ENCODE measurements at regions of chr6 and their contacts with region 1.

Region 1: DNA sequence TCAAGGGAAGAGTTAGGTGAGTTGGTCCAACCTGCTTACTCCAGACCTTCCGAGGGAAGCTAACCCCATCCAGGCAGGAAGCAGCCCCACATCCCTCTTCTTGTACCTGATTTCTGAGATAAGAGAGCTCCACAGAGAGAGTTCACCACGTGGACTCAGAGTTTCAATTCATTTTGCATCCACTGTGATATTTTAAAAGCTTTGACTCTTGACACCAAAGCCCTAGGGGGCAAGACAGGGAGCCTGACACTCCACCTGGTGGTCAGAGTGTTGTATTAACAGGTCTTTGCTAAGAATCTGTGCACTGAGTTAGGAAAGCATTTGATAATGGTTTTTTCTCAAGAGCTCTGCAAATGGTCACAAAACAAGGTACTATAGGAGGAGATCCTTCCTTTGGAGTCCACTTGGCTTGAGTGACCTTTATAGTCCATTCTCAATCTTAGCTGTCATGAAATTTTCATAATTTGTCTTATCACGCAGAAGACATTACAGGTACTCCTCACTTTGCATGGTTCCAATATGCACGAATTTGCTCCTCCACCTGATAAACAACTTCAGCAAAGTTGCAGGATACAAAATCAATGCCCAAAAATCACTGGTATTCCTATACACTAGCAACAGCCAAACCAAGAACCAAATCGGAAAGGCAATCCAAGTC is 56.2 kb upstream of the RIPOR2 start:
- DNase-seq: peak in 1 of 2 experiments; percentile 42
- H3K4me3 ChIP-seq: no peak overlapping the region
- H3K27ac ChIP-seq: no peak overlapping the region
- H3K4me1 ChIP-seq: peaks cover 11% of the 10 kb centered on the region
- H3K27me3 ChIP-seq: no peaks in the 10 kb centered on the region
- CTCF ChIP-seq: peak; percentile 86

Region 2: GRCh38 chr6:24855395-24856245 is 136.3 kb before region 1 on chr6:
- CTCF ChIA-PET with region 1: interaction called, 30 read pairs
- POLR2A ChIA-PET with region 1: interaction called, 9 read pairs
- intact Hi-C with region 1: loop called (anchors 1 kb)
- DNase-seq: peak; percentile 44 to 58
- H3K4me3 ChIP-seq: no peak overlapping the region
- H3K27ac ChIP-seq: no peak overlapping the region
- H3K4me1 ChIP-seq: peaks cover 26% of the 10 kb centered on the region
- H3K27me3 ChIP-seq: no peaks in the 10 kb centered on the region
- CTCF ChIP-seq: peak; percentile 89

Region 3: GRCh38 chr6:24933868-24934401 is 58.0 kb before region 1 on chr6:
- CTCF ChIA-PET with region 1: no interaction called
- POLR2A ChIA-PET with region 1: no interaction called
- intact Hi-C with region 1: loop called (anchors 5 kb)
- DNase-seq: no peak
- H3K4me3 ChIP-seq: no peak overlapping the region
- H3K27ac ChIP-seq: no peak overlapping the region
- H3K4me1 ChIP-seq: peaks cover 24% of the 10 kb centered on the region
- H3K27me3 ChIP-seq: no peaks in the 10 kb centered on the region
- CTCF ChIP-seq: peak; percentile 49; the same call in 1 of the 2 replicates

Region 4: DNA sequence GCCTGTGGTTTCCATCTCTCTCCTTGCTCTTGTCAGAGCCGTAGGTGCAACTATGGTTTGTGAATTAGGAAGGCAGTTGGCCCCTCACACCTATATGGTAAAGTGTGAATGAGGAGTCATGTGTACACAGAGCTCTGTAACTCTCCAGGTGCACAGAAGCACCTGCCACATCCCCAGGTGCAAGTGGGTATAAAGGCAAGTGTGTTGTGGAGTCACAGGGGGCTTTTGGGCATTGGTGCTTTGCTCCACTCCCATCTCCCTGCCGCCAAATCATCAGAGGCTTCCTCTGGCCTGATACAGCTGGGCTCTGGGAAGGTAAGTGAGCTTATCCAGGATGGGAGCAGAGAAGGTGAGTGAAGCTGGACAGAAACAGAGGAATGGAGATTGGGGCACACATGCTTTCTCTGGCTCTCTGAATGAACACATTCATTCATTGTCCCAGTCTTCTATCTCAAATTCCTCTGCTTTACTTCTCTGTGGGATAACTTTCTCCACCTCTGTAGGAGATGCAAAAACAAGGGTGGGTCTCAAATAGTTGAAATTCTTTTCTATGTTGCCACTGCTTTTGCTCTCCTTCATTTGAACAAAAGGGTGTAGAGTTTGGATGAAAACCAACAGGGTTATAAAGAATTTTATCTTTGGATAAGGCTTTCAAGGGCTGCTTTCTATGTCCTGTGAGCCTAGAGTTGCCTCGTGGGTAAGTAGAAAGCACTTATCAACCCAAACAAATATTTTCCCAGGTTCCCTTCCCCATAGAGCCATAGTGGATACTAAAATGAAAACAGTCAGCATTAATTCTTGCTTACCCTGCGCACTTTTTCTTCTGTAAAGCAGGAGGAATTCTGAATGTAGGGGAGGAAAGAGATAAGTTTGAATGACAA is 11.2 kb before region 1 on chr6:
- CTCF ChIA-PET with region 1: interaction called, 4 read pairs
- POLR2A ChIA-PET with region 1: interaction called, 4 read pairs
- intact Hi-C with region 1: loop called (anchors 1 kb)
- DNase-seq: peak; percentile 44 to 88
- H3K4me3 ChIP-seq: no peak overlapping the region
- H3K27ac ChIP-seq: peak overlapping the region; percentile 64
- H3K4me1 ChIP-seq: peaks cover 35% of the 10 kb centered on the region
- H3K27me3 ChIP-seq: no peaks in the 10 kb centered on the region
- CTCF ChIP-seq: no peak

Measured in PC-9 (cell line).